Posterior vena cava (tissue), 2 donors: ENCODE measurements at regions of chr5 and their contacts with region 1.

Region 1: DNA sequence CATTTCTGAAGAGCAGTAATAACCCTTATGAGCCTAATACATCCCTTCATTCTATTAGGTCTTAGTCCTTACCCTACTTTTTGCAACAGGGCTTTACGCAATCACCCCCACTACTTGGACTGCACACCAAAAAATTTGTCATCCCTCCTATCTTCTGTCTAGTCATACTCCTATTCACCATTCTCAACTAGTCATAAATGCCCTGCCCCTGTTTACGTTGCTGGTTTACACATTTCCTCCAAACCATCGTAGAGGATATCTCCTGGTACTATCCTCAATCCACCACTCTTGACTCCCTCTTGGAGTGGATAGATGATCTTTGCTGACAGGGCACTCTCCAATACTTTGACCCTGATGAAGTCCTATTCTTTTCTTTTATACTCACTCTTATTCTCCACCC is 98.2 kb upstream of the CCNG1 start:
- DNase-seq: no peak

Region 2: DNA sequence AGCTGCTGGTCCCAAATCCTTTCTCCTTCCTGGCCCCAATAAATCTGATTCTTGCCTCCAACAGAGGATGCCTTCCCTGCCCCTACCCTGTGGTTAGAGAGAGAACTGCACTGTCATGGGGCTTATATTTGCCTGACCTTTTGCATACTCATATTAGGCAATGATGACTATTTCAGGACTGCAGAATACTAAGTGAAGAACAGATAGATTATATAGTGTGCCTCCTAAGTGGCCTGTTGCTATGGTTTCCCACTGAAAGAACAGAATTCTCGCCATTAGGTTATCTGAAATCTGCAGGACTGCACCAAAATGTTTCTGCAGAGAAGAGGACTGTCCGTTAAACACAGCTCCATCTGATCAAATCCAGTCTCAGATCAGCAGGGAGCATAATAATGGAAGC is 10.9 kb after region 1 on chr5:
- intact Hi-C with region 1: no loop called
- DNase-seq: no peak

Region 3: GRCh38 chr5:165227511-165227910 is 1888.4 kb after region 1 on chr5:
- intact Hi-C with region 1: loop called in 1 of 2 experiments (anchors 5 kb)
- DNase-seq: no peak